Activated naive CD4-positive, alpha-beta T cell treated with anti-CD3 and anti-CD28 coated beads for 36 hours (primary cell): ENCODE measurements at regions of chr2 and their contacts with region 1.

Region 1: GRCh38 chr2:148874868-148875341 is at the start of gene KIF5C:
- DNase-seq: peak; percentile 94
- H3K4me3 Mint-ChIP-seq: peak within 1 kb of the TSS; percentile 88
- H3K27ac Mint-ChIP-seq: peak within 1 kb of the TSS; percentile 53
- H3K4me1 Mint-ChIP-seq: peaks cover 13% of the 10 kb centered on the region
- H3K27me3 Mint-ChIP-seq: peaks cover 19% of the 10 kb centered on the region
- total RNA-seq, gene KIF5C: 18.6 to 24.5 TPM

Region 2: DNA sequence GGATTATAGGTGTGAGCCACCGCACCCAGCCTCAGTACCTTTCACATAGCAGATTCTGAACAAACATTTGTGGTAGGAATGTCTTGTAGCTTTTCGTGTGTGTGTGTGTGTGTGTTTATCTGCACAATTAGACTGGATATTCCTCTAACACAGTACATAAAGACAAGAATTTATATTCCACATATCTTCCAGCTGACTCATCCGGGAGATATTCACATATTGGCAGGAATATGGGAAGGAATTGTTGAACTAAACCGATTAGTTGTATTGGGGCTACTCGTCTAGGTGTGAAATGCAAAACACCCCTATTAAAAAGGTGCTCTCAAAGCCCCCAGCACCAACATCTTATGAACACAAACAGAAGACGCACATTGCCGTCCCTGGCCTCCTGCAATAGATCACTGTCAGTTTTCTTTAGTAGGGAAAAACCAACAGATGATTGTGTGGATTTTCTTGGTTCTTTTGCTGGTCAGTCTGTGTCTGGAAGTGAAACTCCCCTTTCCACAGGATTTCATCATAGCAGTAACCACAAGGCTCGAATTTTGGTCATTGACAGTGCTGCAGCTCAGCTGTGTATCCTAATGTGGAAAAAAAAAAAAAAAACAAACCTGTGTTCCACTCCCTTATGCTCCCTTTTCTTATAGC is 1238.5 kb before region 1 on chr2:
- CTCF ChIA-PET with region 1: no interaction called
- intact Hi-C with region 1: loop called (anchors 10 kb)
- DNase-seq: no peak
- H3K4me3 Mint-ChIP-seq: no peak overlapping the region
- H3K27ac Mint-ChIP-seq: no peak overlapping the region
- H3K4me1 Mint-ChIP-seq: peaks cover 24% of the 10 kb centered on the region
- H3K27me3 Mint-ChIP-seq: no peaks in the 10 kb centered on the region

Region 3: GRCh38 chr2:147711031-147711430 is 1163.9 kb before region 1 on chr2:
- CTCF ChIA-PET with region 1: no interaction called
- intact Hi-C with region 1: no loop called
- DNase-seq: no peak
- H3K4me3 Mint-ChIP-seq: no peak overlapping the region
- H3K27ac Mint-ChIP-seq: no peak overlapping the region
- H3K4me1 Mint-ChIP-seq: peaks cover 9% of the 10 kb centered on the region
- H3K27me3 Mint-ChIP-seq: no peaks in the 10 kb centered on the region

Region 4: GRCh38 chr2:148020111-148021058 is 854.5 kb before region 1 on chr2 and contains the start of gene ORC4:
- CTCF ChIA-PET with region 1: no interaction called
- intact Hi-C with region 1: loop called (anchors 1 kb)
- DNase-seq: peak; percentile 99
- H3K4me3 Mint-ChIP-seq: peak within 1 kb of the TSS; percentile 100
- H3K27ac Mint-ChIP-seq: peak within 1 kb of the TSS; percentile 96
- H3K4me1 Mint-ChIP-seq: peaks cover 44% of the 10 kb centered on the region
- H3K27me3 Mint-ChIP-seq: no peaks in the 10 kb centered on the region
- total RNA-seq, gene ORC4: 35.9 to 38.8 TPM

Region 5: GRCh38 chr2:148350199-148350598 is 524.7 kb before region 1 on chr2:
- CTCF ChIA-PET with region 1: no interaction called
- intact Hi-C with region 1: no loop called
- DNase-seq: no peak
- H3K4me3 Mint-ChIP-seq: no peak overlapping the region
- H3K27ac Mint-ChIP-seq: no peak overlapping the region
- H3K4me1 Mint-ChIP-seq: peaks cover 4% of the 10 kb centered on the region
- H3K27me3 Mint-ChIP-seq: no peaks in the 10 kb centered on the region

Region 6: GRCh38 chr2:148887350-148888002 is 12.6 kb after region 1 on chr2:
- CTCF ChIA-PET with region 1: no interaction called
- intact Hi-C with region 1: loop called (anchors 1 kb)
- DNase-seq: no peak
- H3K4me3 Mint-ChIP-seq: peak overlapping the region; percentile 73
- H3K27ac Mint-ChIP-seq: no peak overlapping the region
- H3K4me1 Mint-ChIP-seq: peaks cover 9% of the 10 kb centered on the region
- H3K27me3 Mint-ChIP-seq: peaks cover 21% of the 10 kb centered on the region

Region 7: DNA sequence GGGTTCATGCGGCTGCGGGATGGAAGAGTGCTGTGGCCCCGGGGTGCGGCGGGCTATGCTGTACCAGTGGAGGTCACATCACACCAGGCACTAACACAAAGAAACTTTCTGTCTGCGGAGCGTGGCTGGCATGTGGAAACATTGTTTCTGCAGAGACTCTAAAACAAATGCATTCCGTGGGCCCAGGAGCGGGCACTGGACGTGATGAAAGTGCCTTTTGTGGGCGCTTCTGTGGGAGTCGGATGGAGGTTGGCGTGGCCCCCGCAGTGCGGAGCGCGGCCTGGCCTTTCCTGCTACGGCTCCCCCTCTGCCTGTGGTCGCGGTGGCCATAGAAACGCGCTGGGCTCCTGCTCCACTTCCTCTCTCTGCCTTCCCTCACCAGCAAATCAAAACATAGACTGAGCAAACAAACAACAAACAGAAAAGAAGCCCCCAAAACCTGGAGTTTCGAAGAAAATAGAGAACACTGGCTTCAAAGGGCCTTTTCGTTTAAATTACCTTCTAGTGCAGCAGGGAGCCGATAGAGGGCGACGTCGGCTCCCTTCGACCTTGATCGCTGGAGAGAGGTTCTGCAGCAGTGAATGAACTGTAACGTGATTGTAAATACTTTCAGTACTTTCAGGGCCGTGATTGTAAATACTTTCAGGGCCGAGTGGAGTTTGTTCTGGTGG is 51.5 kb after region 1 on chr2:
- CTCF ChIA-PET with region 1: no interaction called
- intact Hi-C with region 1: loop called (anchors 1 kb)
- DNase-seq: peak; percentile 67
- H3K4me3 Mint-ChIP-seq: peak overlapping the region; percentile 76
- H3K27ac Mint-ChIP-seq: peak overlapping the region; percentile 37
- H3K4me1 Mint-ChIP-seq: peaks cover 14% of the 10 kb centered on the region
- H3K27me3 Mint-ChIP-seq: no peaks in the 10 kb centered on the region